ENCODE measurements at regions of chr14 and their contacts with region 1.

Region 1: DNA sequence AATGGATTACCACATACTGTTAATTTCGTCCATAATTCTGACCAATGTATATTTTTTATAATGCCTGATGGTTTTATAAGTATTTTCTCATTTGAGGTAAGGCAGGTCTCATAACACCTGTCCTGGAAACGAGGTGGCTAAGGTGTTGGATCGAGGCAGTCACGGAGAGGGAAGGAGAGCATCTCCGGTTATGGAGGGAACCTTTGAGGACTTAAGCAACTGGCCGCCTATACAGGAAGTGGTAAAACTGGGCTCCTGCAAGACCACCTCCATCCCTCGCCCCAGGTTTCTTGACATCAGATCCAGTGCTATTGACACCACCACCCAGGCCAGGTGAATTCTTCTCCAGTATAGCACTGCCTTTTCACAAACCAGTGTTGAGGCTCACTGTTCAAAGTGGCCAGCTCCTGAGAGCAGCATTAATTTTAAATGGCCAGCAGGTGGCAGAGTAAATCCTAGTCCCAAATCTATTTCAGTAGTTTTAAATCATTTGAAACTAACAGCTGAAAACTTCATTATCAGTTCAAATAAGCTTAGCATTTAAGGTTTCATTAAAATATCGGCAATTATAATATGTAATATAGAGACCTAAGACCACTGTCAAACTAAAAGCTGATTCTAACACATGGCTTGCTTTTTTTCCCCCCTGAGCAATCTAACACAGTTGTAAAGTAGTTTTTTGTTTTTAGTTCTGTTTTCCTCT is 100.8 kb downstream of the PPM1A start:
- DNase-seq: peak; percentile 58

Region 2: GRCh38 chr14:60331201-60332045 is 18.4 kb before region 1 on chr14:
- CTCF ChIA-PET with region 1: interaction called, 22 read pairs
- POLR2A ChIA-PET with region 1: no interaction called
- DNase-seq: peak; percentile 71